BJ (cell line): ENCODE measurements at regions of chr20 and their contacts with region 1.

Region 1: DNA sequence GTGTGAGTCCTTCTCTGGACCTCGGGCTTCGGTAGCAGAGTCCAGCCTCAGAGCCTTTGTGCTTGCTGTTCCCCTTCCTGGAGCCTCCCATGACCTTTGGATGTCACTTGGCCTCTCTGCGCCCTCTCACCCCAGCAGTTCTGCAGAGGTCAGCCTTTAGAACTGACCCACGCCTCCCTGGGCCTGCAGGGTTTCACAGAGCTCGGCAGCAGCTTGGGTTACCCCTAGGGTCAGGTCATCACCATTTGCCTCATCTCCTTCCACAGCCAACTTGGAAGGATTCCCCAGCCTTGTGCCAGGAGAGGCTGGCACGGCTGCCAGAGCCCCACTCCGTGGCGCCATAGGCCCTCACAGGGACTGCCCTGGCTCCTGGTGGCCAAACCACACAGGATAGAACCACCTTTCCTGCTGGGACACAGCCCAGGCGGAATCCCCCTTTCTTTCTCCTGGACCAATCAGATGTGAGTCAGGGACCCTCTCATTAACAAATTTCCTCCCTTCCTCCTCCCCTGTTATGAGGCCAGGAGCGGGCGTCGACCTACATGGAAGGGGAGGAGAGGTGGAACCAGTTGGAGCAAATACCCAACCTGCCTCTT is 13.9 kb upstream of the SIRPA start:
- DNase-seq: no peak
- H3K4me3 ChIP-seq: no peak overlapping the region
- H3K27me3 ChIP-seq: peaks cover 3% of the 10 kb centered on the region
- CTCF ChIP-seq: no peak

Region 2: DNA sequence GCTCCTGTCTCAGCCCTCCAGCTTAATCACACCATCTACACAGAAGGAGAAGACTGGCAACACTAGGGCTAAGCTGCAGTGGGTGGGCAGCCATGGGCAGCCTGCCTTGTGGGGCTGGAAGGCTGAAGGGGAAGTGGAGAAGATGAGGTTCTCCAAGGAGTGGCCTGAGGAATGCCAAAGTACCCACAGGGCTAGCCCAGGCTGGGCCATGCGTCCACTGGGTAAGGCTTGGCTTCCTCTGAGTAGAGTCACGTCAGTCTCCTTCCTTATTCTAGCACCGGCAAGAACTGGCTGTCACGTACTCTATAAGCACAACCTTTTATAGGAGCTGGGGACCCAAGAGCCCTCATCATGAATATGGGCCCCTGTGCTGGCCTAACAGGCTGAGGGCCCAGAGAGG is 96.8 kb before region 1 on chr20:
- CTCF ChIA-PET with region 1: no interaction called
- POLR2A ChIA-PET with region 1: interaction called, 24 read pairs
- DNase-seq: no peak
- H3K4me3 ChIP-seq: no peak overlapping the region
- H3K27me3 ChIP-seq: peaks cover 21% of the 10 kb centered on the region
- CTCF ChIP-seq: no peak